H1 (cell line): ENCODE measurements at regions of chr1 and their contacts with region 1.

Region 1: DNA sequence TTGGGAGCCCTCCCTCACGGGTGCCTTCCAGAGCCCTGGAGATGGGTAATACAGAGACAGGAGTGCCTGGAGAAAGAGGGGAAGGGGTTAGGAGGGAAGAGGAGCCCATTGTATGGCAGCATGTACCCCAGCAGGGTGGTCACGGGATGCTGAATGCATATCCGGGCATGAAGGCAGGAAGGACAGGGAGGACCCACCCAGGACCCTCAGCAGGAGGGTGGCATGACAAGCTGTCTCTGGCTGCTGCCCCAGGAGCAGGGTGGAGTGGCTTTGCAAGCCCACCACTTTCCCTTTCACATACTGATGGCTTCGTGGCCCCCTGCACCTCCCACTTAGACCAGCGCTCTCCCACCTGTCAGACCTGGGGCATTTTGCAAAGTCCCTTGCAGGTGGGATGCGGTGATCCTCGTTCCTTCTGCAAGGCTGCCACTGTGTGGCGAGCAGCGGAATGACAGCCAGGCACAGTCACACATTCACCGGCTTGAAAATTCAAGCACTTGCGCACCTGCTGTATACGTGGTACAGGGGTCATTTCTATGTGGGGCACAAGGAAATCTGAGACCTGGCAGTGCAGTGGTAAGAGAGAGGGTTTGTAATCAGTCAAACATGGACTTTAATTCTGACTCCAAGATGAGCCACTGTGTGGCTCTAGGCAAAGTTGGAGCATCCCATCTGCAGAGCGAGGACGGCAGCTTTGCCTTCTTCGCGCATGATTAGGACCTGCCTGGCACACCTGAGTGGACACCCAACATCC is 53.2 kb upstream of the TMEM51 start:
- DNase-seq: peak; percentile 36 to 89
- H3K4me3 ChIP-seq: no peak overlapping the region
- H3K27ac ChIP-seq: no peak overlapping the region
- H3K4me1 ChIP-seq: peaks cover 0 to 9% (median 5%) of the 10 kb centered on the region in 4 experiments; a peak in 5 of 7 replicates
- H3K27me3 ChIP-seq: peaks cover 0 to 4% (median 2%) of the 10 kb centered on the region in 4 experiments; a peak in 3 of 7 replicates
- CTCF ChIP-seq: peak; percentile 93 to 100 (median 99)
- EP300 ChIP-seq: no peak; a peak in 1 of 3 replicates
- POLR2A ChIP-seq: no peak
- RAD21 ChIP-seq: peak; percentile 98 to 99

Region 2: GRCh38 chr1:15046487-15047165 is 53.7 kb before region 1 on chr1:
- CTCF ChIA-PET with region 1: interaction called, 13 read pairs
- POLR2A ChIA-PET with region 1: no interaction called
- DNase-seq: peak; percentile 36 to 94
- H3K4me3 ChIP-seq: no peak overlapping the region
- H3K27ac ChIP-seq: no peak overlapping the region
- H3K4me1 ChIP-seq: no peaks in the 10 kb centered on the region
- H3K27me3 ChIP-seq: no peaks in the 10 kb centered on the region
- CTCF ChIP-seq: peak; percentile 87 to 95 (median 92)
- EP300 ChIP-seq: no peak
- POLR2A ChIP-seq: no peak
- RAD21 ChIP-seq: peak; percentile 98 to 99

Region 3: DNA sequence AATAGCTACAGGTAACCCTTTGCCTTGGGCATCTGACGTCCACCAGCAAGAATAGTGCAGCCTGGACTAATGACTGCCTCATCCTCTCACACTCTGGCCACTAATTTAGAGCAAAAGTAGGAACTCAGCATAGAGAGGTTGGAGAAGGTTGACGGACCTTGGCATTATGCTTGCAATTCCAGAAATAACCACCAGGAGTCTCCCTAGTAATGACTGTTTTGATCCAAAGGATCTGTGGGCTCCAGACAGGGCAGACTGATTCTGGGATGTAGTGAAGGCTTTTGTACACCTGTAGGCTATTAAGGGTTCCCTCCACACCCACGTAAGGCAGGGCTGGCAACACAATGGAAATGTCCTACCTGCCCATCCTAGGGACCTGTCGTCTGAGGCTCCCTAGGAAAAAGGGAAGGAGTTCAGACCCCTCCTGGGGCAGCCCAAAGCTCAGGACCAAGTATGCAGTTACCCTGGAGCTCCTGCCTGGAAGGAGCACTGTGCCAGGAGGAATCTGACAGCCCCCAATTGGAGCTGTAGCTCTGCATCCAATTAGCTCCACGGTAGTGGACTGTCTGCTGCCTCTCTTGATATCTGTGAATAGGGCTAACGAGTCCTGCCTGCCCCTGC is 37.7 kb before region 1 on chr1:
- CTCF ChIA-PET with region 1: interaction called, 32 read pairs
- POLR2A ChIA-PET with region 1: no interaction called
- DNase-seq: peak in 1 of 2 experiments; percentile 71
- H3K4me3 ChIP-seq: no peak overlapping the region
- H3K27ac ChIP-seq: no peak overlapping the region
- H3K4me1 ChIP-seq: no peaks in the 10 kb centered on the region; a peak in 1 of 7 replicates
- H3K27me3 ChIP-seq: no peaks in the 10 kb centered on the region
- CTCF ChIP-seq: peak in 2 of 3 experiments; percentile 60 to 75; a peak in 3 of 4 replicates
- EP300 ChIP-seq: no peak
- POLR2A ChIP-seq: no peak
- RAD21 ChIP-seq: peak; percentile 58 to 68

Region 4: GRCh38 chr1:15075817-15076216 is 24.5 kb before region 1 on chr1:
- CTCF ChIA-PET with region 1: interaction called, 14 read pairs
- POLR2A ChIA-PET with region 1: interaction called, 3 read pairs
- DNase-seq: no peak
- H3K4me3 ChIP-seq: no peak overlapping the region
- H3K27ac ChIP-seq: no peak overlapping the region
- H3K4me1 ChIP-seq: no peaks in the 10 kb centered on the region
- H3K27me3 ChIP-seq: no peaks in the 10 kb centered on the region
- CTCF ChIP-seq: no peak
- EP300 ChIP-seq: no peak
- POLR2A ChIP-seq: no peak
- RAD21 ChIP-seq: no peak

Region 5: DNA sequence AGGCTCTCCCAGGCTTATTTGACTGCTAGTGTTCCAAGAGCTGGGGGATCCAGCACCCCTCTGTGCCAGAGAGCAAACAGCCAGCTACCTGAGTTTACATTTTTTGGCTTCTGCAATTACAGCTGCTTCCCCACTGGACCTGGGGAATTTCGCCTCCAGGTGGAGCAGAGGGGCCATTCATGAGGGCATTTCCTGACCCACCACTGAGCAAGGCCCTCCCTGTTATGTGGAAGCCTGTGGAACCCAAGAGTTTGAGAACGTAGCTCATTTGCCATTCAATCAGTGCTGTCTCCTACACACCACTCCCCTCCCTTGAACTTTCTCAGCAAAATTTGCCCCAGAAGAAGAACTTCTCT is 10.6 kb after region 1 on chr1:
- CTCF ChIA-PET with region 1: interaction called, 13 read pairs
- POLR2A ChIA-PET with region 1: no interaction called
- DNase-seq: no peak
- H3K4me3 ChIP-seq: no peak overlapping the region
- H3K27ac ChIP-seq: no peak overlapping the region
- H3K4me1 ChIP-seq: peaks cover 14 to 32% (median 16%) of the 10 kb centered on the region in 4 experiments
- H3K27me3 ChIP-seq: no peaks in the 10 kb centered on the region; a peak in 1 of 7 replicates
- CTCF ChIP-seq: peak; percentile 56 to 63 (median 60)
- EP300 ChIP-seq: no peak
- POLR2A ChIP-seq: no peak
- RAD21 ChIP-seq: peak; percentile 48 to 69

Region 6: DNA sequence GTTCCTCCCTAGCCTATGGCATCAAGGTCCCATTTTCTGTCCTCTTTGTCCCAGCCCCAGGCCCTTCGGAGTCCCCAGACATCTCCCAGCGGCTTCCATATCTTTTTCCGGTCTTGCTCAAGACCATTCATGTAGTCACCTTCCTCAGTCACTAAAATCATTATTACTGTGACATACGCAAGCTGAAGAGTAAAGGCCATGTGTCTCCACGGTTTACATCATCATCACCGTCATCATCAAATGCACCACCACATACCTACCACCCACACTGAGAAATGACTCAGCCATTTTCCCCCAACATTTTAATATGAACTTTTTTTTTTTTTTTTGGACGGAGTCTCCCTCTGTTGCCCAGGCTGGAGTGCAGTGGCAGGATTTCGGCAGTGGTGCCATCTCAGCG is 190.1 kb after region 1 on chr1:
- CTCF ChIA-PET with region 1: no interaction called
- POLR2A ChIA-PET with region 1: no interaction called
- DNase-seq: no peak
- H3K4me3 ChIP-seq: no peak overlapping the region
- H3K27ac ChIP-seq: no peak overlapping the region
- H3K4me1 ChIP-seq: no peaks in the 10 kb centered on the region
- H3K27me3 ChIP-seq: no peaks in the 10 kb centered on the region
- CTCF ChIP-seq: no peak
- EP300 ChIP-seq: no peak
- POLR2A ChIP-seq: no peak
- RAD21 ChIP-seq: no peak